ENCODE measurements at regions of chr22 and their contacts with region 1.

Region 1: DNA sequence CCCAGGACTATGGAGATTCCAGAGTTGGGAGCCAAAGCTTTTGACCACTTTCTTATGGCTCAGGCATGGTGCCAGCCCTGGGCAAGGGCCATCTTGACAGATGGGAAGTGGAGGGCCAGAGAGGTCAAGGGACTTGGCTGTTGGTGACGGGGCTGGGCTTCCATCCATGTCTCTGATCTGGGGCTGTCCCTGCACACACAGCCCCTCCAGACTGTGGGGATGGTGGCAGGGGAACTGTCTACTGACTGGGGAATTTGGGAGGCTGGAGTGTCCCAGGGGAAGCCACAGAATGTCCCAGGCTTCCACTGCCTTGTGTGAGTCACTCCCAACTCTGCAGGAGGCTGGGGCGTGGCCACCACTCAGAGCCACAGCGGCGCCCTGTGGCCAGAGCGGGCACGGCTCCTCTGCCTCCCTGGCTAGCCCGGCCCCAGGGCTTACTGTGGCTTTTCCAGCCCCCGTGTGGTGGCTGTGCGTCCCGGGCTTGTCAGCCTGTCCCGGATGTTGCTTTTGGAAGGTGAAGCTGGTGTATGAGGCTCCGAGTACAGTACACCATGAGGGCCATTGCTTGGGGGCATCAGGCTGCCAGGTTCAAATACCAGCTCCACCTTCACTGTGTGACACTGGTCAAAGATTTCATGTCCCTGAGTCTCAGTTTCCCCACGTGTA is 19.6 kb downstream of the C22orf23 start:
- DNase-seq: peak; percentile 94
- ATAC-seq: peak; percentile 100
- H3K4me3 Mint-ChIP-seq: no peak overlapping the region
- H3K27ac Mint-ChIP-seq: no peak overlapping the region
- H3K4me1 Mint-ChIP-seq: peaks cover 11% of the 10 kb centered on the region
- H3K27me3 Mint-ChIP-seq: no peaks in the 10 kb centered on the region

Region 2: GRCh38 chr22:37905534-37906363 is 28.1 kb before region 1 on chr22 and contains the start of gene MICALL1:
- CTCF ChIA-PET with region 1: interaction called, 4 read pairs
- POLR2A ChIA-PET with region 1: interaction called, 3 read pairs
- intact Hi-C with region 1: loop called in 1 of 2 experiments (anchors 1 kb)
- DNase-seq: peak; percentile 80
- ATAC-seq: peak; percentile 86
- H3K4me3 Mint-ChIP-seq: peak within 1 kb of the TSS; percentile 72
- H3K27ac Mint-ChIP-seq: peak within 1 kb of the TSS; percentile 79
- H3K4me1 Mint-ChIP-seq: peaks cover 21% of the 10 kb centered on the region
- H3K27me3 Mint-ChIP-seq: no peaks in the 10 kb centered on the region
- total RNA-seq, gene MICALL1: 11.2 to 11.8 TPM

Region 3: DNA sequence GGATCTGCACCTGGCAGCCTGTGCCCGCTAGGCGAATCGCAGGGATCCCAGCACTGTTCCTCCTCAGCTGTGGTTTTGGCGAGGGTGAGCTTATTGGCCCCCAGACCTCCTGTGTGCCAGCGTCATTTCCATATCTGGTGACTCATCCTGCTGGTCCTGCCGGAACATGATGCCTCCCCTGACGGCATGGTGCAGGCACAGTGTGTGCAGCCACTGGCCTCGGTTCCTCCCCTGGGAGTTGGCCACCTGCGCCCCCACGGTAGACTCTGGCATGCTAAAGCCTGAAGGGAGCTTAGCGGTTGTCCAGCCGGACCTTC is 66.1 kb after region 1 on chr22:
- CTCF ChIA-PET with region 1: no interaction called
- POLR2A ChIA-PET with region 1: no interaction called
- intact Hi-C with region 1: loop called in 1 of 2 experiments (anchors 10 kb)
- DNase-seq: peak; percentile 27
- ATAC-seq: peak; percentile 74
- H3K4me3 Mint-ChIP-seq: no peak overlapping the region
- H3K27ac Mint-ChIP-seq: no peak overlapping the region
- H3K4me1 Mint-ChIP-seq: no peaks in the 10 kb centered on the region
- H3K27me3 Mint-ChIP-seq: no peaks in the 10 kb centered on the region